HepG2 (cell line): ENCODE measurements at regions of chr2 and their contacts with region 1.

Region 1: DNA sequence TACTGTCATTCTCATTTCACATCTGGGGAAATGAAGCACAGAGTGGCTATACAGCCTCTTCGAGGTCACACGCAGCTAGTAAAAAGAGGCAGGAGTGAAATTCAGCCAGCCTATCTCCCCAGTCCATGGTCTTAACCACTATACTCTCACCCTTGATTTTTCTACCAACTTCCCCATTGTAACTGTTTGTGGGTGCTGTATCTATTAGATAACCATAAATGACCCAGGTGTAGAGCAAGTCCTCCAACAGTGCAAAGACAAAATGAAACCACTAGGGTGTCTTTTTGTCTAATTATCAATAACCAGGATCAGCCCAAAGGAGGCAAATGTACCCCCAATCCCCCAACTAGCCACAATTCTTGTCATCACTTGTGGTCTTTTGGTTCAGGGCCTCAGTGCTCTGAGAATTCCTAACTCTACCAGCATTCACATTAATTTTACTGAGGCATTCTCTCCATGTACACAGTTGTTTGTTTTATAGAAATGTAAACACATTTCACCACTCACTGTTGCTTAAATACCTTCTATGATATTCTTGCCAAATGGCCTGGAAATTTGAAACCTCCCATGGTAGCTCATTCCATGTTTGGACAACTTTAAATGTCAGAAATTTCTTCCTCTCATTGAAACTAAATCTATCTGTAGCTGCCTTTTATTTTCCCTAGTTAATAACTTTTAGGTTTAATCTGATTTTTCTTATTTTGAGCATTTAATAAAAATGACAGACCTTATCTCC is 58.7 kb downstream of the SLC40A1 start:
- DNase-seq: peak; percentile 75
- ATAC-seq: peak; percentile 84
- H3K4me3 ChIP-seq: peak overlapping the region in 1 of 3 experiments; percentile 30; a peak in 1 of 6 replicates
- H3K27ac ChIP-seq: peak overlapping the region; percentile 57
- H3K4me1 ChIP-seq: peaks cover 36% of the 10 kb centered on the region
- H3K27me3 ChIP-seq: no peaks in the 10 kb centered on the region
- CTCF ChIP-seq: no peak
- EP300 ChIP-seq: peak in 1 of 2 experiments; percentile 68; a peak in 2 of 4 replicates
- POLR2A ChIP-seq: no peak
- RAD21 ChIP-seq: no peak

Region 2: DNA sequence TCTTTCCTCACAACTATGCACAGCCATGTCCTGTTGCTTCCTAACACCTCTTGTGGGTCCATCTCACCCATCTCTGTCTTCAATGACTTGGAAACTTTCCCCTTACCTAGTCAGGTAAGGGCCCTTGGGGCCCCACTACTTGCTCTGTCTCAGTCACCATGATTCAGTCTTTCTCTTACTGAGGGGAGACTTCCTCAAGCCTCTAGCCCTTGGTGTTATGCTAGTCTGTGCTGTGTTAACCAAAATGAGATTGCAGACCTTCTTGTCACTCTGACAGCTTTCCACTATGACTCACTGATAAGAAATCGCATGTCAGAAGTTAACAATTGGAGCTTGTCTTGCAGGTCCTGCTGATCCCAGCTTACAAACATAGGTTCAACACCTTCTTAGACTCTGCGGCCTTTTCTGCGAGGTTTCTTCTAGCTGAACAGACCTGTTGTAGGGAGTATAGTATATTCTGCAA is 15.3 kb before region 1 on chr2:
- CTCF ChIA-PET with region 1: interaction called, 3 read pairs
- POLR2A ChIA-PET with region 1: interaction called, 4 read pairs
- in situ Hi-C with region 1: no loop called
- intact Hi-C with region 1: loop called (anchors 2 kb)
- DNase-seq: peak; percentile 87
- ATAC-seq: peak; percentile 89
- H3K4me3 ChIP-seq: no peak overlapping the region
- H3K27ac ChIP-seq: no peak overlapping the region
- H3K4me1 ChIP-seq: peaks cover 41% of the 10 kb centered on the region
- H3K27me3 ChIP-seq: no peaks in the 10 kb centered on the region
- CTCF ChIP-seq: no peak
- EP300 ChIP-seq: peak in 1 of 2 experiments; percentile 65; a peak in 2 of 4 replicates
- POLR2A ChIP-seq: no peak
- RAD21 ChIP-seq: no peak

Region 3: GRCh38 chr2:189534854-189535832 is 13.3 kb after region 1 on chr2:
- CTCF ChIA-PET with region 1: no interaction called
- POLR2A ChIA-PET with region 1: interaction called, 16 read pairs
- in situ Hi-C with region 1: no loop called
- intact Hi-C with region 1: no loop called
- DNase-seq: peak; percentile 53
- ATAC-seq: peak; percentile 52
- H3K4me3 ChIP-seq: no peak overlapping the region
- H3K27ac ChIP-seq: no peak overlapping the region
- H3K4me1 ChIP-seq: peaks cover 32% of the 10 kb centered on the region
- H3K27me3 ChIP-seq: no peaks in the 10 kb centered on the region
- CTCF ChIP-seq: no peak
- EP300 ChIP-seq: peak in 1 of 2 experiments; percentile 57; a peak in 1 of 4 replicates
- POLR2A ChIP-seq: no peak
- RAD21 ChIP-seq: no peak

Region 4: DNA sequence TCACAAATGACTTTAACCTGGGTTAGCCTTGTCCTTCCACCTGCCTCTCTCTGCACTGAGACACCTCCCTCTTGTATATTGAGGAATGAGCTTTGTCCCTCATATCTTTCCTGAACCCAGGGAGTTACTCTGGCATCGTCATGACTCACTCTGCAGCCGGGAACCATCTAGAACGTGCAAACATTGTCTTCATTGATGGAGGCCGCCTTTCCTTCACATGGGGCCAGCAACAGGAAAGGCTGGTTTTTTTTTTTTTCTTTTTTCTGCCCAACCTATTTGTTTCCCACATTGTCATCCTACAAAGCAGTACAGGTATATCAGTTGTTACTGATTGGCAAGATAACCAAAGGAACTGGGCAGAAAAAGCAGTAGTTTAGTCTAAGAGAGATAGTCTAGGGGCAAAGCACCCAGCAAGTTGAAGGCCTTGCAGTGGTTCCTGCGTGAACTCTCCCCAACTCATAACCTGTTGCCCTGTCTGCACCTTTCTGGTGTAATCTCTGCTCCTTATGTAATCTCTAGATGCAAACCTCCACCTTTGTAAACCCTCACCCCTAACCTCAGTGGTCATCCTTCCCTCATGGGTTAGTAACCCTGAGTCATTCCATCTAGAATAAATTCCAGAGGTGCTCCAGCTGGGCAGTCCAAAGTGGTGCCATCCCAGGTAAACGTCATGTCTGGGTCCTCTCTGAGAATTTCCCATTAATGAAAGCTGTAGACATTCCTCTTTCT is 20.5 kb after region 1 on chr2:
- CTCF ChIA-PET with region 1: no interaction called
- POLR2A ChIA-PET with region 1: interaction called, 10 read pairs
- in situ Hi-C with region 1: no loop called
- intact Hi-C with region 1: no loop called
- DNase-seq: peak; percentile 87
- ATAC-seq: peak; percentile 90
- H3K4me3 ChIP-seq: no peak overlapping the region
- H3K27ac ChIP-seq: peak overlapping the region; percentile 11
- H3K4me1 ChIP-seq: peaks cover 32% of the 10 kb centered on the region
- H3K27me3 ChIP-seq: no peaks in the 10 kb centered on the region
- CTCF ChIP-seq: no peak
- EP300 ChIP-seq: peak in 1 of 2 experiments; percentile 77; a peak in 2 of 4 replicates
- POLR2A ChIP-seq: no peak
- RAD21 ChIP-seq: no peak

Region 5: GRCh38 chr2:189549449-189549832 is 27.6 kb after region 1 on chr2:
- CTCF ChIA-PET with region 1: no interaction called
- POLR2A ChIA-PET with region 1: interaction called, 13 read pairs
- in situ Hi-C with region 1: no loop called
- intact Hi-C with region 1: no loop called
- DNase-seq: no peak
- ATAC-seq: peak; percentile 19; the same call in 2 of the 3 replicates
- H3K4me3 ChIP-seq: no peak overlapping the region
- H3K27ac ChIP-seq: peak overlapping the region; percentile 54
- H3K4me1 ChIP-seq: peaks cover 46% of the 10 kb centered on the region
- H3K27me3 ChIP-seq: no peaks in the 10 kb centered on the region
- CTCF ChIP-seq: no peak
- EP300 ChIP-seq: no peak
- POLR2A ChIP-seq: no peak
- RAD21 ChIP-seq: no peak

Region 6: DNA sequence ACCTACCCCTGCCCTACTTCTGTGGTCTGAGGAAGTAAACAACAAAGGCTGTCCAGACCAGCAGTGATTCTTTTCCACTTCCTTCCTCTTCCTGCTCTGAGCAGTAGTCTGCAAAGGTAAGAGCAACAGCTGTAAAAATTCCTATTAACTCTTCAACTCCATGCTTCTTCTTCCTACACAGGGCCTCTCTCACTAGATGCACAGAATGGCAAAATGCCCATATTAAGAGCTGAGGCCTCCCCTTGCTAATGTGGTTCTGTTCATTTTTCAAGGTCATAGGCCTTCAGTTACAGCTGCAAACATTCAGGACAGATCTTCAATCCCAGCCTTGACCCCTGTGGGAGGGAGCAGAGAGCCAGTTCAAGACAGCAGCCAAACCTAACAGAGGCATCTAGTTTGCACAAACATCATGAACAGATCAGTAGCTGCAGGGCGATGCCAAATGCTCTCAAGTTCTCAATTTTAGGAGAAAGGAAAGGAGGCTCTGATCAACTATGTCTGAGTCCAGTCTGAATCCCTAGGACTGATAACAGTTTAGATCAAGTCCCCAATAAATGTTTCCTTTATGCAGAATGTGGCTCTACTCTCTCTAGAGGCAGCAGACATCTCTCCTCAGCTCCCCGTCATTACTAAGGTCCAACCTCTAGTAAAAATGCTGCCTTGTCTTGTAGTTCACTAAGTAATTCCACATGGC is 37.9 kb after region 1 on chr2:
- CTCF ChIA-PET with region 1: no interaction called
- POLR2A ChIA-PET with region 1: interaction called, 4 read pairs
- in situ Hi-C with region 1: no loop called
- intact Hi-C with region 1: loop called (anchors 5 kb)
- DNase-seq: no peak
- ATAC-seq: peak; percentile 78
- H3K4me3 ChIP-seq: no peak overlapping the region
- H3K27ac ChIP-seq: peak overlapping the region; percentile 34
- H3K4me1 ChIP-seq: peaks cover 56% of the 10 kb centered on the region
- H3K27me3 ChIP-seq: no peaks in the 10 kb centered on the region
- CTCF ChIP-seq: no peak
- EP300 ChIP-seq: no peak; a peak in 1 of 4 replicates
- POLR2A ChIP-seq: no peak
- RAD21 ChIP-seq: no peak

Region 7: GRCh38 chr2:189613077-189613636 is 91.3 kb after region 1 on chr2:
- CTCF ChIA-PET with region 1: no interaction called
- POLR2A ChIA-PET with region 1: interaction called, 9 read pairs
- in situ Hi-C with region 1: no loop called
- intact Hi-C with region 1: loop called (anchors 5 kb)
- DNase-seq: peak; percentile 96
- ATAC-seq: peak; percentile 94
- H3K4me3 ChIP-seq: peak overlapping the region in 2 of 3 experiments; percentile 11 to 20; a peak in 1 of 6 replicates
- H3K27ac ChIP-seq: peak overlapping the region; percentile 30
- H3K4me1 ChIP-seq: peaks cover 37% of the 10 kb centered on the region
- H3K27me3 ChIP-seq: no peaks in the 10 kb centered on the region; a peak in 1 of 5 replicates
- CTCF ChIP-seq: no peak
- EP300 ChIP-seq: peak in 1 of 2 experiments; percentile 57; a peak in 1 of 4 replicates
- POLR2A ChIP-seq: no peak
- RAD21 ChIP-seq: no peak